Activated CD4-positive, alpha-beta T cell treated with anti-CD3 and anti-CD28 coated beads for 36 hours (primary cell): ENCODE measurements at regions of chr1 and their contacts with region 1.

Region 1: GRCh38 chr1:153990468-153991150 is at the start of gene RPS27:
- DNase-seq: peak; percentile 91
- ATAC-seq: peak; percentile 90
- H3K4me3 Mint-ChIP-seq: peak within 1 kb of the TSS; percentile 93
- H3K27ac Mint-ChIP-seq: peak within 1 kb of the TSS; percentile 96
- H3K4me1 Mint-ChIP-seq: peaks cover 49% of the 10 kb centered on the region
- H3K27me3 Mint-ChIP-seq: no peaks in the 10 kb centered on the region
- total RNA-seq, gene RPS27: 1,867 to 2,094 TPM

Region 2: GRCh38 chr1:153510984-153511410 is 479.6 kb before region 1 on chr1:
- CTCF ChIA-PET with region 1: interaction called, 3 read pairs
- POLR2A ChIA-PET with region 1: no interaction called
- intact Hi-C with region 1: loop called in 1 of 2 experiments (anchors 1 kb)
- DNase-seq: peak; percentile 90
- ATAC-seq: peak; percentile 95
- H3K4me3 Mint-ChIP-seq: no peak overlapping the region
- H3K27ac Mint-ChIP-seq: peak overlapping the region; percentile 74
- H3K4me1 Mint-ChIP-seq: peaks cover 10% of the 10 kb centered on the region
- H3K27me3 Mint-ChIP-seq: no peaks in the 10 kb centered on the region

Region 3: GRCh38 chr1:153566440-153567379 is 423.9 kb before region 1 on chr1:
- CTCF ChIA-PET with region 1: no interaction called
- POLR2A ChIA-PET with region 1: no interaction called
- intact Hi-C with region 1: no loop called
- DNase-seq: peak; percentile 95
- ATAC-seq: peak; percentile 84
- H3K4me3 Mint-ChIP-seq: peak overlapping the region; percentile 71
- H3K27ac Mint-ChIP-seq: peak overlapping the region; percentile 100
- H3K4me1 Mint-ChIP-seq: peaks cover 52% of the 10 kb centered on the region
- H3K27me3 Mint-ChIP-seq: no peaks in the 10 kb centered on the region

Region 4: GRCh38 chr1:153727463-153728304 is 262.9 kb before region 1 on chr1 and contains the start of gene INTS3:
- CTCF ChIA-PET with region 1: no interaction called
- POLR2A ChIA-PET with region 1: interaction called, 4 read pairs
- intact Hi-C with region 1: loop called in 1 of 2 experiments (anchors 1 kb)
- DNase-seq: peak; percentile 99
- ATAC-seq: peak; percentile 99
- H3K4me3 Mint-ChIP-seq: peak within 1 kb of the TSS; percentile 93
- H3K27ac Mint-ChIP-seq: peak within 1 kb of the TSS; percentile 95
- H3K4me1 Mint-ChIP-seq: peaks cover 44% of the 10 kb centered on the region
- H3K27me3 Mint-ChIP-seq: no peaks in the 10 kb centered on the region
- total RNA-seq, gene INTS3: 52.0 to 58.0 TPM

Region 5: GRCh38 chr1:153805042-153805745 is 185.4 kb before region 1 on chr1:
- CTCF ChIA-PET with region 1: interaction called, 14 read pairs
- POLR2A ChIA-PET with region 1: interaction called, 4 read pairs
- intact Hi-C with region 1: loop called in 1 of 2 experiments (anchors 1 kb)
- DNase-seq: peak; percentile 87
- ATAC-seq: peak; percentile 98
- H3K4me3 Mint-ChIP-seq: peak overlapping the region; percentile 28
- H3K27ac Mint-ChIP-seq: peak overlapping the region; percentile 85
- H3K4me1 Mint-ChIP-seq: peaks cover 30% of the 10 kb centered on the region
- H3K27me3 Mint-ChIP-seq: no peaks in the 10 kb centered on the region

Region 6: DNA sequence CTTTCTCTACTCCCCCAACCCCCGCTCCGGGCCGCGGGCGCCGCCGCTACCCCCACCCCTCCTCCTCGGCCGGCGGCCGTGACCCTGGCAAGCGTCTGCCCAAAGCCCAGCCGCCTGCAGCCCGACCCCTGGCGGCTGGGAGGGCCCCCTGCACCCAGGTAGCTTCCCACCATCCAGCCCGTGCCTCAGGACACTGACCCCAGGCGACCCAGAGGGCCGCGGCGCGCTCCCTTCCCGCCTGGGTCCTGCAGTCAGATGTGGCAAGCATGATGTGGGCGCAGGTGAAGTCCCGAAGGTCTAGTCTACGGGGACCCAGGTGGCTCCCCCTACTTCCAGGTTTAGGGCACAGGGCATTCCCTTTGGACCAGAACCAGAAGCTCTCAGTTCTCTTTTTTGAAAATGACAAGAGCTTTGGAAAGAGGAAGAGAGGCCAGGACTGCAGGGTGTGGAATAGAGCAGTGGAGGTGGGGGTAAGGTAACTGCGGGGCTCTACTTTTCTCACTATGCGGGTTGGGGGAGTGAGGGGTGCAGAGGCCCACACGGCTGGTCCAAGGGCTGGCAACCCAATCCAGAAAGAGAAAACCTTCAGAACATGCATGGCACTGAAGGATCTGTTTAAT is 43.9 kb before region 1 on chr1 and contains the start of gene DENND4B:
- CTCF ChIA-PET with region 1: interaction called, 18 read pairs
- POLR2A ChIA-PET with region 1: interaction called, 15 read pairs
- intact Hi-C with region 1: loop called (anchors 1 to 5 kb)
- DNase-seq: peak; percentile 87
- ATAC-seq: peak; percentile 74
- H3K4me3 Mint-ChIP-seq: peak within 1 kb of the TSS; percentile 88
- H3K27ac Mint-ChIP-seq: peak within 1 kb of the TSS; percentile 96
- H3K4me1 Mint-ChIP-seq: peaks cover 24% of the 10 kb centered on the region
- H3K27me3 Mint-ChIP-seq: no peaks in the 10 kb centered on the region
- total RNA-seq, gene DENND4B: 100 to 110 TPM

Region 7: DNA sequence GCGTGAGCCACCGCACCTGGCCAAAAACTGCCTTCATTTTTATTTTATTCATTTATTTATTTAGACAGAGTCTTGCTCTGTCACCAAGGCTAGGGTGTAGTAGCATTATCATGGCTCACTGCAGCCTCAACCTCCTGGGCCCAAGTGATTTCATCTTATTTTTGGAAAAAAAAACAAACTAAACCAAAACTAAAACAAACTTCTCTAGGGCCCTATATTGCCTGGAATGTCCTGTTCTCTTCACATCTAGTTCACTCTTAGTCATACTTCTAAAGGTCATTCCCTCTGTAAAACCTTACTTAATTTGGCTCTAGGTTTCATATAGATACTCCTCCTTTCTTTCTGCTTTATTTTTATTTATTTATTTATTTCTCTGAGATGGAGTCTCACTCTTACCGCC is 15.5 kb after region 1 on chr1:
- CTCF ChIA-PET with region 1: interaction called, 4 read pairs
- POLR2A ChIA-PET with region 1: interaction called, 11 read pairs
- intact Hi-C with region 1: no loop called
- DNase-seq: no peak
- ATAC-seq: no peak
- H3K4me3 Mint-ChIP-seq: no peak overlapping the region
- H3K27ac Mint-ChIP-seq: no peak overlapping the region
- H3K4me1 Mint-ChIP-seq: no peaks in the 10 kb centered on the region
- H3K27me3 Mint-ChIP-seq: no peaks in the 10 kb centered on the region

Region 8: GRCh38 chr1:154220071-154220969 is 229.7 kb after region 1 on chr1 and contains the start of gene UBAP2L:
- CTCF ChIA-PET with region 1: no interaction called
- POLR2A ChIA-PET with region 1: interaction called, 4 read pairs
- intact Hi-C with region 1: loop called in 1 of 2 experiments (anchors 2 kb)
- DNase-seq: peak; percentile 99
- ATAC-seq: peak; percentile 92
- H3K4me3 Mint-ChIP-seq: peak within 1 kb of the TSS; percentile 99
- H3K27ac Mint-ChIP-seq: peak within 1 kb of the TSS; percentile 100
- H3K4me1 Mint-ChIP-seq: peaks cover 70% of the 10 kb centered on the region
- H3K27me3 Mint-ChIP-seq: no peaks in the 10 kb centered on the region
- total RNA-seq, gene UBAP2L: 205 to 255 TPM

Region 9: GRCh38 chr1:155206891-155207805 is 1216.5 kb after region 1 on chr1:
- CTCF ChIA-PET with region 1: no interaction called
- POLR2A ChIA-PET with region 1: no interaction called
- intact Hi-C with region 1: no loop called
- DNase-seq: peak; percentile 95
- ATAC-seq: peak; percentile 60
- H3K4me3 Mint-ChIP-seq: peak overlapping the region; percentile 62
- H3K27ac Mint-ChIP-seq: peak overlapping the region; percentile 86
- H3K4me1 Mint-ChIP-seq: peaks cover 29% of the 10 kb centered on the region
- H3K27me3 Mint-ChIP-seq: no peaks in the 10 kb centered on the region